MCF 10A (cell line): ENCODE measurements at regions of chr1 and their contacts with region 1.

Region 1: DNA sequence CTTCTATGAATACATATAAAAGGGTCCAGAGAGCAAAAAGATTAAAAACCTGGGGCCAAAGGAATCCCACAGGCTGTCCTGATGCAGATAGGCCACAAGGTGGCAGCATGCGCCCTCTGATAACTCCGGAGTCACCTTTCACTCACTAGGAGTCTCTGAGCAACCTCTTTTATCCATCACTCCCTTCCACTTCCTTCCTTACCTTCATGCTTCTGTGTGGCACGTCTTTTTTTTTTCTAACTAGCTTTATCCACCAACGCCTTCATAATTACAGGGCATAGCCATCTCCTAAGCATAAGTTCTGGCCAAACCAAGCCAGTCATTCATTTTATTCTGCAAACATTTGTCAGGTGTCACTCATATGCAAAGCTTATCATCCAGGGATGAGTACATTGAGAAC is 3.9 kb upstream of the PGLYRP4 start:
- DNase-seq: peak; percentile 87
- H3K4me3 Mint-ChIP-seq: no peak overlapping the region
- H3K27ac Mint-ChIP-seq: no peak overlapping the region
- H3K4me1 Mint-ChIP-seq: peaks cover 26% of the 10 kb centered on the region
- H3K27me3 Mint-ChIP-seq: peaks cover 40% of the 10 kb centered on the region
- CTCF ChIP-seq: peak; percentile 99

Region 2: GRCh38 chr1:153365303-153366095 is 13.0 kb after region 1 on chr1:
- CTCF ChIA-PET with region 1: interaction called, 52 read pairs
- POLR2A ChIA-PET with region 1: interaction called, 24 read pairs
- intact Hi-C with region 1: no loop called
- DNase-seq: peak; percentile 95
- H3K4me3 Mint-ChIP-seq: peak overlapping the region; percentile 17
- H3K27ac Mint-ChIP-seq: peak overlapping the region; percentile 46
- H3K4me1 Mint-ChIP-seq: peaks cover 56% of the 10 kb centered on the region
- H3K27me3 Mint-ChIP-seq: no peaks in the 10 kb centered on the region
- CTCF ChIP-seq: no peak

Region 3: DNA sequence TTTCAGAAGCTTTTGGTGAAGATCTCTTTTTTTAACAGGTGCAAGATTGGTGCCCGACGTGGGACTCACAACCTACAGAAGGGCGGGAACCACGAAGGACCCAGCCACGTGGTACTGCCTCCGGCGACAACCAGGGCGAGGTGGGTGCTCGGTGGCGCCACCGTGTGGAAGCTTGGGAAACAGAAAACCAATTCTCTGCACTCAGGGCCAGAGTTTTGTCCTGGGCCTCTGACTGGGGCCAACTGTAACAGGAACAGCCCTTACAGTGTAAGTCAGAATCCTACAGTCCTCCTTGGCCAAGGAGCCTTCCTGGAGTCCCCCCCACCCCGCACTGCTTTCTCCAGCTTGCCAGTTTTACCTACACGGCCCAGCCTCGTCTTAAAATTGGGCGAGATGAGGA is 52.2 kb after region 1 on chr1:
- CTCF ChIA-PET with region 1: interaction called, 92 read pairs
- POLR2A ChIA-PET with region 1: interaction called, 4 read pairs
- intact Hi-C with region 1: loop called (anchors 1 kb)
- DNase-seq: peak; percentile 73
- H3K4me3 Mint-ChIP-seq: no peak overlapping the region
- H3K27ac Mint-ChIP-seq: no peak overlapping the region
- H3K4me1 Mint-ChIP-seq: no peaks in the 10 kb centered on the region
- H3K27me3 Mint-ChIP-seq: peaks cover 67% of the 10 kb centered on the region
- CTCF ChIP-seq: peak; percentile 86

Region 4: DNA sequence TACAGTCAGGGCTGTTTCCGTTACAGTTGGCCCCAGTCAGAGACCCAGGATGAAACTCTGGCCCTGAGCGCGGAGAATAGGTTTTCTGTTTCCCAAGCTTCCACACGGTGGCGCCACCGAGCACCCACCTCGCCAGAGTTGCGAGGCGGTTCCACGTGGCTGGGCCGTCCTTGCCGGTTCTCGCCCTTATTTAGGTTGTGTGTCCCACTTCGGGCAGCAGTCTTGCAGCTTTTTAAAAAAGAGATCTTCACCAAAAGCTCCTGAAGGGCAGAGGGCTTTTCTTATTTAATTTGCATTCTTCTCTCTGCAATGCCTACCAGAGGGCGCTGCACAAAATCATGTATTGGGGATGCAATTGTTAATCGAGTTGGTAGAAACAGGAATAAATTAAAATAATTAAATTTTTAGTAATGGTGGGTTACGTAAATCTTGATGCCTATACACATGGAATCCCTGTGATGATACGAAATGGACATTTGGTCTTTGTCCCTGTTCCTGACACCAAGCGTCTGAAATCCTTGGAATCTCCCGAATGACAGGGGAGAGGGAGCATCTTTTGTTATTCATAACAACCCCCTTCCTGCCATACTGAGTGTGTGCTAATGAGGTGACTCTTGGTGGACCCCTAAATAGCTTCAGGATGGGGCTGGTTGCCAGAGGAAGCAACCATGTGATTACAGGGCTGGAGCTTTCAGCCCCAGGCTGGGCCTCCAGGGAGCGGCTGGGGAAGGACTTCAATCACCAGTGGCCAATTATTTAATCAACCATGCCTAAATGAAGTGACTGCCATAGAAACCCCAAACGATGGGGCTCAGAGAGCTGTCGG is 113.5 kb after region 1 on chr1:
- CTCF ChIA-PET with region 1: interaction called, 26 read pairs
- POLR2A ChIA-PET with region 1: no interaction called
- intact Hi-C with region 1: no loop called
- DNase-seq: peak; percentile 72
- H3K4me3 Mint-ChIP-seq: no peak overlapping the region
- H3K27ac Mint-ChIP-seq: no peak overlapping the region
- H3K4me1 Mint-ChIP-seq: no peaks in the 10 kb centered on the region
- H3K27me3 Mint-ChIP-seq: peaks cover 32% of the 10 kb centered on the region
- CTCF ChIP-seq: peak; percentile 93

Region 5: GRCh38 chr1:153520230-153520629 is 167.7 kb after region 1 on chr1:
- CTCF ChIA-PET with region 1: interaction called, 10 read pairs
- POLR2A ChIA-PET with region 1: interaction called, 3 read pairs
- intact Hi-C with region 1: no loop called
- DNase-seq: no peak
- H3K4me3 Mint-ChIP-seq: no peak overlapping the region
- H3K27ac Mint-ChIP-seq: peak overlapping the region; percentile 37
- H3K4me1 Mint-ChIP-seq: peaks cover 28% of the 10 kb centered on the region
- H3K27me3 Mint-ChIP-seq: no peaks in the 10 kb centered on the region
- CTCF ChIP-seq: no peak